ENCODE measurements at regions of chr1 and their contacts with region 1.

Region 1: GRCh38 chr1:225474986-225475820 is 47.4 kb upstream of the LBR start:
- DNase-seq: peak; percentile 36 to 88 (median 68)
- ATAC-seq: peak; percentile 96
- H3K4me3 ChIP-seq: no peak overlapping the region
- H3K4me3 Mint-ChIP-seq: peak overlapping the region in 5 of 10 donors; percentile 38 to 59 (median 56)
- H3K27ac ChIP-seq: no peak overlapping the region
- H3K27ac Mint-ChIP-seq: peak overlapping the region in 2 of 9 donors; percentile 38 to 87
- H3K4me1 ChIP-seq: peaks cover 11 to 37% of the 10 kb centered on the region in 2 donors
- H3K4me1 Mint-ChIP-seq: peaks cover 36 to 61% (median 52%) of the 10 kb centered on the region in 7 donors
- H3K27me3 ChIP-seq: no peaks in the 10 kb centered on the region
- H3K27me3 Mint-ChIP-seq: peaks cover 0 to 5% (median 0%) of the 10 kb centered on the region in 5 donors

Region 2: DNA sequence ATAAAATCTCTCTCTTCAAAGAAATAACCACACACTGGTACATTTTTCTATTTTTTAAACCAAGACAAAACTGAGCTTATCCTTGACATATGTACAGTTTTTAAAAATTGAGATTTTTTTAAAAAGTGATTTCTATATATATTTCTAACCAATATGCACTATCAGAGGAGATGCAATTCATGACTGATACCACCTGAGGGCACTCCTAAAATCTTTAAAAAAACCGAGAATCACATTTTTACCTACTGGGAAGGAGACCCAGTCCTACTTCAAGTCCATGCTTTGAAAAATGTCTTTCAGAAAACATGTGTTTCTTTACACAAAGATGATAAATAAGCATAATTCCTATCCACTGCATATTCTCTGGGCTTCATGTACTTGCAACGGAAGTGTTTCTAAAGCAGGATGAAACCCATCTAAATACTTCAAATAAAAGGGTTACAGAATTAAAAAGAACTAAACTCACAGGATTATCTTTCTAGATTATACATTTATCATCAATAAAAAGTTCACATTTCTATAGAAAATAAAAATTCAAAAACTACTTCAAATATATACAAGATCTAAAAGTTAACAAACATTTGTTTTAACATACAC is 79.1 kb after region 1 on chr1:
- CTCF ChIA-PET with region 1: no interaction called
- POLR2A ChIA-PET with region 1: no interaction called
- intact Hi-C with region 1: loop called (anchors 1 to 5 kb)
- DNase-seq: peak in 5 of 9 donors; percentile 25 to 34 (median 30)
- ATAC-seq: peak; percentile 54
- H3K4me3 ChIP-seq: no peak overlapping the region
- H3K4me3 Mint-ChIP-seq: no peak overlapping the region
- H3K27ac ChIP-seq: no peak overlapping the region
- H3K27ac Mint-ChIP-seq: no peak overlapping the region
- H3K4me1 ChIP-seq: no peaks in the 10 kb centered on the region
- H3K4me1 Mint-ChIP-seq: no peaks in the 10 kb centered on the region
- H3K27me3 ChIP-seq: no peaks in the 10 kb centered on the region
- H3K27me3 Mint-ChIP-seq: peaks cover 0 to 16% (median 5%) of the 10 kb centered on the region in 5 donors

Region 3: DNA sequence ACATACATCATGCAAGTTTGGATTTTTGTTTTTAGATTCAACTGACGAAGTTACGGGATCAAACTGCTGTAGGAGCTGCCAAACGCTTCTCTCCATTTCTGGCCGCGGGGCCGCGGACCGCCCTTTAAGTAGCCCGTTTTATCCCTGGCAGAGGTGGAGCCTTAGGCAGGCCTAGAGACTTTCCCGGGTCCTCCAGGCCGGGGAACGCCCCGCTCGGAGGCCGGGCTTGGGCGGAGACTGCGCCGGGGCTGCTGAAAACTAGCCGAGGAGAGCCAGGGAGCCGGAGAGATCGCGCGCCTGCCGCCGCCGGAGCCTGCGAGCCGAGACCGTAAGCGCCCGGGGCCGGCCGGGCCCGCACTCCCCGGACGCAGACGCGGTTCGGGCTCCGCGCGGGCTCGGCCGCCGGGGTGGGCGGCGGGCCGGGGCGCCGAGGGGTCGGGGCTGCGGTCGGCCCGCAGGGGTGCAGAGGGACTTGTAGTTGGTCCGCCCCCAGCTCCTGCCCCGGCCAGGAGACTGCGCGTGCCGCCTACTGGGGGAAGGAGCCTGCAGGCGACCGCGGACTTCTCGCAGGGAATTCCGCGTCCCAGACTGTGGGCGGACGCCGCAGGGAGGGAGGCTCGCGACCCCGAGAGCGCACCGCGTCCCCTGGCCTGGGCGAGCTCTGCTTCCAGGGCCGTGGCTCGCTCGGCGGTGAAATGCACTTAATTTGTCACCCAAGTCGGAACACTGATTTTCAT is 334.8 kb after region 1 on chr1 and contains the start of gene EPHX1:
- CTCF ChIA-PET with region 1: no interaction called
- POLR2A ChIA-PET with region 1: no interaction called
- intact Hi-C with region 1: loop called in 1 of 2 experiments (anchors 1 kb)
- DNase-seq: peak; percentile 35 to 78 (median 54)
- ATAC-seq: peak; percentile 89
- H3K4me3 ChIP-seq: peak within 1 kb of the TSS; percentile 41
- H3K4me3 Mint-ChIP-seq: peak within 1 kb of the TSS; percentile 77 to 89 (median 85)
- H3K27ac ChIP-seq: peak within 1 kb of the TSS; percentile 29
- H3K27ac Mint-ChIP-seq: peak within 1 kb of the TSS in 7 of 9 donors; percentile 8 to 61 (median 34)
- H3K4me1 ChIP-seq: no peaks in the 10 kb centered on the region
- H3K4me1 Mint-ChIP-seq: peaks cover 0 to 19% (median 8%) of the 10 kb centered on the region in 7 donors
- H3K27me3 ChIP-seq: no peaks in the 10 kb centered on the region
- H3K27me3 Mint-ChIP-seq: peaks cover 0 to 23% (median 0%) of the 10 kb centered on the region in 5 donors
- total RNA-seq, gene EPHX1: 1.5 to 3.2 (median 2.0) TPM

Region 4: GRCh38 chr1:225923692-225924555 is 448.7 kb after region 1 on chr1 and contains the start of gene PYCR2:
- CTCF ChIA-PET with region 1: no interaction called
- POLR2A ChIA-PET with region 1: no interaction called
- intact Hi-C with region 1: loop called in 1 of 2 experiments (anchors 1 kb)
- DNase-seq: peak; percentile 92 to 97 (median 94)
- ATAC-seq: peak; percentile 99
- H3K4me3 ChIP-seq: peak within 1 kb of the TSS; percentile 100
- H3K4me3 Mint-ChIP-seq: peak within 1 kb of the TSS; percentile 86 to 98 (median 94)
- H3K27ac ChIP-seq: peak within 1 kb of the TSS; percentile 95
- H3K27ac Mint-ChIP-seq: peak within 1 kb of the TSS; percentile 90 to 98 (median 95)
- H3K4me1 ChIP-seq: peaks cover 11 to 65% of the 10 kb centered on the region in 2 donors
- H3K4me1 Mint-ChIP-seq: peaks cover 45 to 75% (median 60%) of the 10 kb centered on the region in 7 donors
- H3K27me3 ChIP-seq: no peaks in the 10 kb centered on the region
- H3K27me3 Mint-ChIP-seq: no peaks in the 10 kb centered on the region
- total RNA-seq, gene PYCR2: 46.4 to 137 (median 109) TPM

Region 5: GRCh38 chr1:225987491-225988316 is 512.5 kb after region 1 on chr1:
- CTCF ChIA-PET with region 1: interaction called, 6 read pairs
- POLR2A ChIA-PET with region 1: interaction called, 4 read pairs
- intact Hi-C with region 1: loop called in 1 of 2 experiments (anchors 1 kb)
- DNase-seq: peak in 5 of 9 donors; percentile 41 to 54 (median 49)
- ATAC-seq: peak; percentile 80
- H3K4me3 ChIP-seq: no peak overlapping the region
- H3K4me3 Mint-ChIP-seq: peak overlapping the region in 1 of 10 donors; percentile 12
- H3K27ac ChIP-seq: no peak overlapping the region
- H3K27ac Mint-ChIP-seq: peak overlapping the region in 6 of 9 donors; percentile 1 to 55 (median 23)
- H3K4me1 ChIP-seq: peaks cover 0 to 10% of the 10 kb centered on the region in 2 donors
- H3K4me1 Mint-ChIP-seq: peaks cover 11 to 35% (median 24%) of the 10 kb centered on the region in 7 donors
- H3K27me3 ChIP-seq: no peaks in the 10 kb centered on the region
- H3K27me3 Mint-ChIP-seq: no peaks in the 10 kb centered on the region

Region 6: DNA sequence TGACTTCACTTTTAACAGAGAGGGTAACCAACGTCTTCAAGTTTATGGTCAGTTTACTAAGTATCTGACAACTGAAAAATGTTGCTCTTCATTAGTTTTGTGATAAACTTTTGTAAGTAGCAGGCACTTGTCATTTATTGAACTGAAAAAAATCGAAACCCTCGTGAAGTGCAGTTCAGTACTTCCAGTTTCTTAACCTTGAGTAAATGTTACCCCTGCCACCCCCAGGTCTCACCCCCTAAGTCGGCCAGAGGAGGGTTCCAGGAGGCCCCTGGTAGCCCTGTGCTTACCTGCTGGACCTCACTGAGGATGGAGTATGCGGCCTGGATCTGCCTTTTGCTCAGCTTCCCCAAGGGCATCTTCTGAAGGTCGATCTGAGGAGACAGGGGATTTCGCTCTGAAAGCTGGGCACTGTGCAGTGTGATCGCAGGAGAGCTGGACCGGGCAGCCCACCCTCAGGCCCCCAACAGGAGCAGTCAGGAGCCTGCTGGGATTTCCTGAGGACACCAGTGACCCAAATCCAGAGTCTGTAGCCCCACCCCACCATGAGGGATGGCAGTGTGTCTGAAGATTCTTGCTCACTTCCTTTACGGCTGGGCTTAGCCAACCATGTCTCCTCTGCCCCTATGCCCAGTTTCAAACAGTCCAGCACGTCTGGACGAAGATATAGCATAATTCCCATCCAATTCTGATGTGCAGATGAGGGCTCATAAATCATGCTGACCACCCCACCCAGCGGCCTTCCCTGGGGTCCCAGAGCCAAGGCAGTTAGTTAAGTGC is 895.1 kb after region 1 on chr1:
- CTCF ChIA-PET with region 1: no interaction called
- POLR2A ChIA-PET with region 1: no interaction called
- intact Hi-C with region 1: no loop called
- DNase-seq: no peak
- ATAC-seq: no peak
- H3K4me3 ChIP-seq: no peak overlapping the region
- H3K4me3 Mint-ChIP-seq: no peak overlapping the region
- H3K27ac ChIP-seq: no peak overlapping the region
- H3K27ac Mint-ChIP-seq: peak overlapping the region in 1 of 9 donors; percentile 65
- H3K4me1 ChIP-seq: no peaks in the 10 kb centered on the region
- H3K4me1 Mint-ChIP-seq: peaks cover 0 to 2% (median 0%) of the 10 kb centered on the region in 7 donors
- H3K27me3 ChIP-seq: no peaks in the 10 kb centered on the region
- H3K27me3 Mint-ChIP-seq: no peaks in the 10 kb centered on the region

Measured in naive thymus-derived CD4-positive, alpha-beta T cell (primary cell).